Heart left ventricle (tissue), 16 donors: ENCODE measurements at regions of chr1 and their contacts with region 1.

Region 1: DNA sequence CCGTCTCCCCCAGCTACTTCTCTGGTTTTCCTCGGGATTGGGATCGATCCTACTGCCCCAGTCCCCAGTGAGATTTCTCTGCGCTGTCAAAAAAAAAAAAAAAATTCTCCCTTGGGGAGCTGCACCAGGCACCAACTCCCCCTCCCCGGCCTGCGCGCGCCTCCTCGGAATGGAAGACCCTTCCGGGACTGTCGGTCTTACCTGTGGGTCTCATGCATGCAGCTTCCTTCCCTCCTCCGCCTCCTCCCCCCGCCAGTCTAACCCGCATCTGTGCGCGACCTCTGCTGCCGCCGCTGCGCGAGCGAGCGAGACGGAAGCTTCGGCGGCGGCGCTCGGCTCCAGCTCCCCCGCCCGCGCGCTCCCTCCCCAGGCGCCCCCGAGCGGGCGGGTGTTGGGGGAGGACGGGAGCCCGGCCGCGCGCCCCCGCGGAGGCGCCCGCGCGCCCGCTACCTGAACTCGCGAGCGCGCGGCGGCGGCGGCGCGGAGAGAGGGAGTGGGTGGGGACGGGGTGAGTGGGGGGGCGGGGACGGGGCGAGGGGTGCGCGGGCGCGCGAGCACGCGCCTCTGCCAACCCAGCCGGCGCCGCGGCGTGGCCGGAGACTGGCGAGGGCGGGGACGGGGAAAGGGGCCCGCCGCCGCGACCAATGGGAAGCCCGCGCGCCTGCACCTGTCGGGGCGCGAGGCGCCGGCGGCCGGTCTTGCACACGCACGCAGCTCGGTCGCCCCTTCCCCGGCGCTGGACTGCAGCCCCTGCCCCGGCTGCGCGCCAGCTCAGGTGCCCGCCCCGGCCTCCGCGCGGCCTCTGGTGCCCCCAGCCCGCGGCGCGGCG is at the start of gene SUSD4:
- DNase-seq: peak in 3 of 5 donors; percentile 29 to 67 (median 51)
- ATAC-seq: peak in 3 of 4 donors; percentile 71 to 87 (median 80)
- H3K4me3 ChIP-seq: peak within 1 kb of the TSS; percentile 39 to 77 (median 54)
- H3K27ac ChIP-seq: peak within 1 kb of the TSS in 4 of 12 donors; percentile 29 to 48 (median 47)
- H3K4me1 ChIP-seq: peaks cover 0 to 25% (median 15%) of the 10 kb centered on the region in 12 donors
- H3K27me3 ChIP-seq: peaks cover 0 to 55% (median 4%) of the 10 kb centered on the region in 9 donors
- CTCF ChIP-seq: no peak
- POLR2A ChIP-seq: no peak
- total RNA-seq, gene SUSD4: 1.4 to 27.2 (median 2.4) TPM

Region 2: GRCh38 chr1:223142795-223143536 is 221.1 kb before region 1 on chr1 and contains the start of gene TLR5:
- intact Hi-C with region 1: loop called in 2 of 10 experiments (anchors 2 to 5 kb)
- DNase-seq: peak; percentile 87 to 95 (median 91)
- ATAC-seq: peak; percentile 83 to 97 (median 94)
- H3K4me3 ChIP-seq: peak within 1 kb of the TSS; percentile 41 to 81 (median 68)
- H3K27ac ChIP-seq: peak within 1 kb of the TSS in 10 of 12 donors; percentile 33 to 88 (median 66)
- H3K4me1 ChIP-seq: peaks cover 0 to 47% (median 14%) of the 10 kb centered on the region in 12 donors
- H3K27me3 ChIP-seq: no peaks in the 10 kb centered on the region
- CTCF ChIP-seq: peak; percentile 48 to 84 (median 64)
- POLR2A ChIP-seq: peak in 1 of 2 donors; percentile 46
- total RNA-seq, gene TLR5: 0.25 to 9.0 (median 2.0) TPM

Region 3: GRCh38 chr1:223175032-223175431 is 189.0 kb before region 1 on chr1:
- intact Hi-C with region 1: loop called in 1 of 10 experiments (anchors 5 kb)
- DNase-seq: no peak
- ATAC-seq: peak; percentile 55 to 84 (median 76)
- H3K4me3 ChIP-seq: no peak overlapping the region
- H3K27ac ChIP-seq: peak overlapping the region in 4 of 12 donors; percentile 31 to 93 (median 49)
- H3K4me1 ChIP-seq: peaks cover 0 to 50% (median 0%) of the 10 kb centered on the region in 12 donors
- H3K27me3 ChIP-seq: peaks cover 0 to 4% (median 0%) of the 10 kb centered on the region in 9 donors
- CTCF ChIP-seq: peak in 11 of 12 donors; percentile 18 to 53 (median 37)
- POLR2A ChIP-seq: no peak

Region 4: DNA sequence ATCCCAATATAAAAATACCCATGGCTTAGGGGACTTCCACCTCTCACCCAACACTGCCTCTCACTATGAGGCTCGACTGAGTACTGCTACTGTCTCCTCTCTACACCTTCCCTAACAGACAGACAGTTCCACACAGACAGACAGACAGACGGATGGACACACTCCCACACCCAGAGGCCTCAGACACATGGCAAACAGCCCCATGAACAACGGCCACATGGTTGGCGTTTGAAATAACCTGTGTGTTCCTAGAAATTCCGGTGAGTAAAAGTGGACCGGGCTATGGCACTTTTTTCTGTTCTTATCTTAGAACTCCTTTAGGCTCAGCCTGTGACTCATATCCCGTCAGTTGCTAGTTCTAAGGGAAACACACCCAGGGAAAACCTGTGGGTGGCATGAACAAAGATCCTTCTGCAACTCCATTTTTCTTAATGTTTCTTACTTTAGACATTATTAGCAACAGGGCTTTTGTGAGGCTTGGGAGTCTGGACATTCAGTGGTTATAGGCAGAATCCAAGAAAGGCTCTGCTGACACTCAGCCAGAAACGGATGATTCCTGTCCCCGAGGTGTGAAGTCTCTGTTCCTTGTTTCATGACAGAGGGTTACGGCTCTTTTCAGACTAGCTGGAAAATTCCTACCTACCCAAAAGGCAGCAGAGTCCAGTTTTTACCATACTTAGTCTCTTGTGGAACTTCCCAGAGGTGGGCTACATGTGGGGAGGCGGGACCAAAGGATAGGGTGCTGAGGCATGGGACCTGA is 130.5 kb before region 1 on chr1:
- intact Hi-C with region 1: loop called in 1 of 10 experiments (anchors 5 kb)
- DNase-seq: peak in 2 of 5 donors; percentile 33 to 40
- ATAC-seq: peak; percentile 55 to 94 (median 90)
- H3K4me3 ChIP-seq: no peak overlapping the region
- H3K27ac ChIP-seq: peak overlapping the region in 11 of 12 donors; percentile 14 to 70 (median 52)
- H3K4me1 ChIP-seq: peaks cover 0 to 22% (median 14%) of the 10 kb centered on the region in 12 donors
- H3K27me3 ChIP-seq: no peaks in the 10 kb centered on the region
- CTCF ChIP-seq: no peak
- POLR2A ChIP-seq: no peak